ENCODE measurements at regions of chr2 and their contacts with region 1.

Region 1: DNA sequence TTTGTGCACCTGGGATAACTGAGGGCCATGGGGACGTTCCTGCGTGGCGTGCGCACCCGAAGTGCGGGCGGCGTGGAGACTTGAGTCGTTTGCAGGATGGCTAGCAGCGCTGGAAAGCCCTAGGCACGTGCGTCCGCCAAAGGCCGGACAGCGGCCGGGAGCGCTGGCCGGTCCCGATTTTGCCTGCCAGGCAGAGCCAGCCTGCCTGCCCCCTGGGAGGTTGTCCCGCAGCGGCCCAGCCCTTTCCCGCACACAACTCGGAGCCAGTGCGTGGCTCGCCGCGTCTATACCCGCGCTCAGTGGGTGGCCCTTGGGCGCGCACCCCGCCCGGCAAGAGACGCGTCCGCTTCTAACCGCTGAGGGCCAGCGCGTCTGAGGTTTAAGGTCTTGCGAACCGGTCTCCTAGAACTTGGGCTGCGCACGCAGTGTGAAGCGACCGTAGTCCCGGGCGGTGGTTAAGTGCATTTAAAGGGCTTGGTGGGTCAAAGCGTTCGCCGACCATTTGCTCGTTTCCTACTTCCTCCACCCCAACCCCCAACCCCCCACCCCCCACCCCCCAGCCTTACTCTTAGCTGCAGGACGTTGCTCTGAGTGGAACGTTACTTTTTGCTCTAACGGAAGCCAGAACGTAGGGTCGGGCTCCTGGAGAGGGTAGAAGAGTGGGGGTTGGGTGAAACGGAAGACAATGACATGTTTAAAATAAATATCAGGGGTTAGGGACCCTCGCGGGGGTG is 627 bp downstream of the CDCA7 start:
- DNase-seq: peak; percentile 54
- H3K4me3 Mint-ChIP-seq: peak overlapping the region; percentile 80
- H3K27ac Mint-ChIP-seq: peak overlapping the region; percentile 69
- H3K4me1 Mint-ChIP-seq: peaks cover 58% of the 10 kb centered on the region
- H3K27me3 Mint-ChIP-seq: peaks cover 26% of the 10 kb centered on the region

Region 2: DNA sequence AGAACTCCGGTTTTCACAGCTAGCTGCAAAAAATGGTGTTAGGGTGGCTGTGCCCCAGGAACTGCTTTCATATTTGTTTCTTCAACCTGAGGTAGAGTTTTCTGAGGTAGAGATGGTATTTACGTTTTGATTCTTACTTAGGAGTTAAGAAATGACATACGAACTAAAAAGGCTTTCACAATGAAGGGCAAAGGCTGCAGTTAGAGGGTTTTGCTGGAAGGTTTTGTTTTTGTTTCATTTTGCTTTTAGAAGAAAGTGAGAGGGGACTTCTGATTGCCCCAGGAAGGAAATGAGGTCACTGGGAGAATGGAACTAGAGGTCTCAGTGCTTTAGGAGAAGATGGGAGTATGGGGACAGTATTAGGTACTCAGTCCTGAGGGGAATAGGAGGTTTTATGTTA is 14.9 kb after region 1 on chr2:
- CTCF ChIA-PET with region 1: no interaction called
- POLR2A ChIA-PET with region 1: interaction called, 10 read pairs
- DNase-seq: no peak
- H3K4me3 Mint-ChIP-seq: no peak overlapping the region
- H3K27ac Mint-ChIP-seq: peak overlapping the region; percentile 49
- H3K4me1 Mint-ChIP-seq: peaks cover 20% of the 10 kb centered on the region
- H3K27me3 Mint-ChIP-seq: no peaks in the 10 kb centered on the region